BJ (cell line): ENCODE measurements at regions of chr12 and their contacts with region 1.

Region 1: DNA sequence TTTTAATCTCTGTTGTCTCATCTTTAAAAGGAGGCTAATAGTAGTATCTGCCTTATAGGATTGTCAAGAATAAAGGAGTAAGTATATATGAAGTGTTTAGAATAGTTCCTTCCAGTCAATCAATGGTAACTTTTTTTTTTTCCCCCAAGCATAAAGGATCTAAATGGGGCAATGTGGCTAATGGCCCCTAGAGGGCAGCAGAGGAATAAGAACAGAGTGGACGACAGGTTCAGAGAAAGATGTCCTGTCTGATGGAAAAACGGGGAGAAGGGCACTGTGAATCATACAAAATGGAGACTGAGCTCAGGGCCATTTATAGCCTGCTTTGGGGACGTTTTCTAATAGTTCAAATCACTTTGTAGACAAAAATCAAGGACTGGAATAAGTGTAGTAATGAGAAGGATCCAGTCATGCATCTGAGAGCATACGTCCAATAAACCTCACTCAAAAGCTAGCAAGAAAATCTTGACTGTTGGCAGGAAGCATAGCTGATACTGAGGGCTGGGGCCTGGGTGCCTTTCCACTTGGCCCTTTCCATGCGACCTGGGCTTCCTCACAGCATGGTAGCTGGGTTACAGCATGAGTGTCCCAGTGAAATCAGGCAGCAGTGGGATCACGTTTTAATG is 51.3 kb downstream of the IFNG-AS1 start:
- DNase-seq: peak; percentile 16
- H3K4me3 ChIP-seq: no peak overlapping the region
- H3K27me3 ChIP-seq: no peaks in the 10 kb centered on the region; the same call in 1 of the 2 replicates
- CTCF ChIP-seq: peak; percentile 89

Region 2: GRCh38 chr12:67545083-67545697 is 495.4 kb before region 1 on chr12:
- CTCF ChIA-PET with region 1: no interaction called
- POLR2A ChIA-PET with region 1: no interaction called
- DNase-seq: no peak
- H3K4me3 ChIP-seq: no peak overlapping the region
- H3K27me3 ChIP-seq: peaks cover 2% of the 10 kb centered on the region; the same call in 1 of the 2 replicates
- CTCF ChIP-seq: no peak

Region 3: DNA sequence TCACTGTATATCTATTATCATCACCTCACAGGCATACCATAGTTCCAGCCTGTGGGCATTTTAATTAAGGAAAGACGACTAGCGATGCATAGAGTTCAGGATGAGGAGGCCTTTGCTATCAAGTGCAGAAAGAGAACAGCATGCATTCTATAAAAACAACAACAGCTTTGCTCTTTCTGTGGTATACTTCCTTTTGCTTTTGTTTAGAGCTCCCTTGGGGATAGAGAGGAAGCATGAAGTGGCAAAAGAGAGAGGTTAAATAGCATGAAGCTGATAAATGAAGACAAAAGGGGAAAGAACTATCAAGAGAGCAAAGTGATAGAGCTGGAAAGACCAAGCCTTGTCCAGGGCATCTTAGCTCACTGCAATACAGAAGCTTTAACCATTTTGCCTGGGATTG is 27.9 kb before region 1 on chr12:
- CTCF ChIA-PET with region 1: interaction called, 13 read pairs
- POLR2A ChIA-PET with region 1: no interaction called
- DNase-seq: no peak
- H3K4me3 ChIP-seq: no peak overlapping the region
- H3K27me3 ChIP-seq: no peaks in the 10 kb centered on the region
- CTCF ChIP-seq: no peak

Region 4: GRCh38 chr12:68067762-68068376 is 27.3 kb after region 1 on chr12:
- CTCF ChIA-PET with region 1: interaction called, 11 read pairs
- POLR2A ChIA-PET with region 1: no interaction called
- DNase-seq: no peak
- H3K4me3 ChIP-seq: no peak overlapping the region
- H3K27me3 ChIP-seq: peaks cover 6% of the 10 kb centered on the region
- CTCF ChIP-seq: peak; percentile 65

Region 5: GRCh38 chr12:68158432-68158831 is 117.9 kb after region 1 on chr12:
- CTCF ChIA-PET with region 1: interaction called, 23 read pairs
- POLR2A ChIA-PET with region 1: no interaction called
- DNase-seq: no peak
- H3K4me3 ChIP-seq: no peak overlapping the region
- H3K27me3 ChIP-seq: 0 out of 2 replicates have a peak, but pooled peaks cover under 1% of the 10 kb centered on the region
- CTCF ChIP-seq: peak; percentile 50